Posterior cingulate gyrus (tissue), 11 donors: ENCODE measurements at regions of chr6 and their contacts with region 1.

Region 1: DNA sequence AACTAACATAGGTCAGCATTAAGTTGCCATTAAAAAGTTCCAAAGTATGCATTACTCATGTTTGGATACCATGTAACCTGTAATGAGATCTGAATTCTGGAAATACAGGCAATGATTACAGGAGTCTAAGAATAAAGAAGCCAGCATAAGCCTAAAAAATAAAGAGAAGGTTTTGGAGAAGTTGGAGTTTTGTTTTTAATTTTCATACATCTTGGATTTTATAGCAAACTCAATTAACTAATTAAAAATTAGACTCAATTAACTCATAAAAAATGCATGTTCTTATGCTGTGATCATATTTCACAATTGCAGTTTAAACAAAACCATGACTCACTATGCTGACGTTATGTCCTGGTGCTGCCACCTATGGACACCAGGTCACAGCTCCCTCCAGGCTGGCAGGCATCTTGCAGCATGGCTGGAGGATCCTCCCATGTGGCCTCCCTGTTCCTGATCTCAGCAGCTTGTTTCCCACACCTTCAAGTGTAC is 648.8 kb upstream of the AGPAT4 start:
- DNase-seq: peak in 4 of 10 donors; percentile 11 to 47 (median 28)

Region 2: GRCh38 chr6:161748535-161749416 is 173.9 kb before region 1 on chr6:
- intact Hi-C with region 1: loop called (anchors 10 kb)
- DNase-seq: peak in 7 of 10 donors; percentile 14 to 87 (median 56)